ENCODE measurements at regions of chr19 and their contacts with region 1.

Region 1: GRCh38 chr19:35931161-35931873 is 4.9 kb upstream of the LRFN3 start:
- DNase-seq: peak; percentile 97
- H3K4me3 ChIP-seq: peak overlapping the region in 3 of 4 donors; percentile 16 to 41 (median 23)
- H3K27ac ChIP-seq: peak overlapping the region; percentile 50 to 80 (median 64)
- H3K4me1 ChIP-seq: peaks cover 9 to 33% (median 10%) of the 10 kb centered on the region in 3 donors
- H3K27me3 ChIP-seq: no peaks in the 10 kb centered on the region
- CTCF ChIP-seq: peak; percentile 74 to 99 (median 92)
- POLR2A ChIP-seq: peak in 3 of 4 donors; percentile 72 to 94 (median 73)

Region 2: DNA sequence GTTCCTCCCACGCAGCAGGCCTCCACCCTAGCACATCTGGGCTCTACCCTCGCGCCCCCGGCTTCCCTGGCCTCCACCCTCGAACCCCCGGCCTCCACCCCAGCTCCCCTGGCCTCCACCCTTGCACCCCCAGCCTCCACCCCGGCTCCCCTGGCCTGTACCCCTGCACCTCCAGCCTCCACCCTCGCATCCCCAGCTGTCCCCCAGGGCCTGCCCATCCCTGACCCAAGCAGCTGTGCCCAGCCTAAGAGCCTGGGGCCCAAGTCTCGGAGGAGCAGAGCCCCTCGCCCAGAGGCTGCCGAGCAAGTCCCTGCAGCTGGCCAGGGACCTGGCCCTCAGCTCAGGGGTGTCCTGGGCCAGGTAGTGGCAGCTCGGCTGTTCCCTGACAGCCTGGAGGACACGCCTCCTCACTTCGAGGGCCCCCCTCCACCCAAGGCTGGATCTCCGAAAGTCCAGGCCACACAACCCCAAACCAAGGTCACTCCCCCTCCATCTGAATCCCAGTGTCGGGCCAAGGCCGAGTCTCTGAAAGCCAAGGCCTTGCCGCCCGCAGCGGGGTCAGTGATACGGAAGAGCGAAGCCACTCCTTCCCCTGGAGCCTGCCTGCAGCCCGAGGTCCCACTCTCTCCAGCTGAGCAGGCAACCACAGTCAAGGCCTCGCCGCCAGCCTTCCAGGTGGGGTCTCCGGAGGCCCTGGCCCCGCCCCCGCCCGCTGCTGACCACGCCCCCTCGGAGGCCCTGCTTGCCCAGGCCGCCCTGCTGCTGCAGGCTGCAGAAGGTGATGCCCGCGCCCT is 163.8 kb before region 1 on chr19:
- intact Hi-C with region 1: loop called (anchors 10 kb)
- DNase-seq: no peak
- H3K4me3 ChIP-seq: no peak overlapping the region
- H3K27ac ChIP-seq: no peak overlapping the region
- H3K4me1 ChIP-seq: peaks cover 0 to 2% (median 0%) of the 10 kb centered on the region in 3 donors
- H3K27me3 ChIP-seq: no peaks in the 10 kb centered on the region
- CTCF ChIP-seq: no peak
- POLR2A ChIP-seq: no peak

Region 3: GRCh38 chr19:35879770-35880317 is 51.5 kb before region 1 on chr19:
- intact Hi-C with region 1: loop called (anchors 5 kb)
- DNase-seq: peak; percentile 32
- H3K4me3 ChIP-seq: no peak overlapping the region
- H3K27ac ChIP-seq: no peak overlapping the region
- H3K4me1 ChIP-seq: peaks cover 0 to 6% (median 0%) of the 10 kb centered on the region in 3 donors
- H3K27me3 ChIP-seq: peaks cover 0 to 21% (median 0%) of the 10 kb centered on the region in 4 donors
- CTCF ChIP-seq: peak in 1 of 6 experiments; percentile 11
- POLR2A ChIP-seq: no peak

Region 4: DNA sequence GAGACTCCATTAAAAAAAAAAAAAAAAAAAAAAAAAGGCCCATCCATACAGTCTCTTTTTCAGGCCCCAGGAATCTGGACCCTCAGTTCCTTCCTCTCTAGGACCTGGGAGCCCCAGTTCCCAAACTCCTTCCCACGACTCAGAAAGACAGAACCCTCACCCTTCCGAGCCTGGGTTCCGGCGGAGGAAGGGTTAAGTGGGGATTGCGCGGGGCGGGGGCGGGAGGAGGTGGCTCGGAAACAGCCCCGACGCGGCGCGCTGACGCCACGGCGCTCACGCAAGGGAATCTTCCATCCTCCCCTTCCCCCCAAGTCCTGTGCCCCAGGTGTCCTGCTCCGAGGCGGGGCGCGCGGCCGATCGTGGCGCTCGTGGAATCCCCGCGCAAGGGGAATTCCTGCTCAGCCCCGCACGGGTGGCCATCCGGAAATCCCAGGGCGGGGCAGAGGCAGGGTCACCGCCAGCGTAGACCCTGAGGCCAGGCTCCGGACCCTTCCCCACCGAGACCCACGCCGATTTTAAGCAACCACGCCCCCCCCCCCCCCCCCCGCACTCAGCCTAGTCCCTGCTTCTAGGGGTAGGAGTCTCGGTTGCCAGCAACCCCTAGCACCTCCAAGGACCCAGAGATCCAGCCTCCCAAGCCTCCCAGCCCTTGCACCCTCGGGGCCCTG is 31.6 kb before region 1 on chr19:
- intact Hi-C with region 1: loop called (anchors 5 kb)
- DNase-seq: peak; percentile 48
- H3K4me3 ChIP-seq: peak overlapping the region; percentile 55 to 77 (median 62)
- H3K27ac ChIP-seq: peak overlapping the region; percentile 87 to 97 (median 94)
- H3K4me1 ChIP-seq: peaks cover 9 to 71% (median 31%) of the 10 kb centered on the region in 3 donors
- H3K27me3 ChIP-seq: no peaks in the 10 kb centered on the region
- CTCF ChIP-seq: peak in 1 of 6 experiments; percentile 4
- POLR2A ChIP-seq: peak in 2 of 4 donors; percentile 37 to 66

Measured in esophagus squamous epithelium (tissue), 5 donors.